Activated CD4-positive, alpha-beta T cell treated with anti-CD3 and anti-CD28 coated beads, Interleukin-2, amount 10 ng/mL, durations not matched to agents 24 days and 14 days (primary cell): ENCODE measurements at regions of chr1 and their contacts with region 1.

Region 1: DNA sequence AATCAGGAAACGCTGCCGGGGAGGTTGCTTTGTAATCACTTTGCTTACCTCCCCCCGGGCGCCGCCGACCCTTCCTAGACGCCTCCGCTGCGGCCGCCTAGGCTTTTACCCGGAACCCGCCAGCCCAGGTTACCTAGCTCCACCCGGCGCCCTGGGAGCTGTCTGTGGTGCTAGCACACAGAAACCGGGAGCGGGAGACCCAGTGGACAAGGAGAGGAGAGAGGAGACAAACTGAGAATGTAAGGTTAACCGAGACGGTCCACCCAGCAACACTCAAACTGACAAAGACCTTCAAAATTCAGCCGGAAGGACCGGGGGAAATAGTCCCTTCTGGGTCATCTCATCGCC is 9.8 kb downstream of the BARHL2 start:
- DNase-seq: peak; percentile 62
- H3K4me3 Mint-ChIP-seq: no peak overlapping the region
- H3K27ac Mint-ChIP-seq: no peak overlapping the region
- H3K4me1 Mint-ChIP-seq: peaks cover 2% of the 10 kb centered on the region
- H3K27me3 Mint-ChIP-seq: peaks cover 77% of the 10 kb centered on the region

Region 2: DNA sequence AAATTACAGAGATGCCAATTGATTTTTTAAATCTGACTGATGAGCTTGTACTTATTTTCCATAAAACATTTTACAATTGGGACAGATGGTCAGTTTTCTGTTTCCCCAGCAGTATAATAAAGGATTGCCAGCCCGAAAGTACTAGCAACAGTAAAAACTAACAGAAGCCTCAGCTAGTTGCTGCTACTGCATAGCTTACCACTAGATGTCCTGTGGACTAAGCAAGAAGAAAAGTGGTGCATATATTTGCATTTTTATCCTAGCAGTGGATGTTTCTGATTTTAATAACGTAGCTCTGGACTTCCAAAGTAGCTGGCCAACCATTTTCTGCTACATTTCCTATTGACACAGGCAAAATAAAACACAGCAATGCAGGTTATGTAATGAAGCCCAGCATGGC is 231.7 kb before region 1 on chr1:
- intact Hi-C with region 1: no loop called
- DNase-seq: no peak
- H3K4me3 Mint-ChIP-seq: no peak overlapping the region
- H3K27ac Mint-ChIP-seq: no peak overlapping the region
- H3K4me1 Mint-ChIP-seq: no peaks in the 10 kb centered on the region
- H3K27me3 Mint-ChIP-seq: peaks cover 2% of the 10 kb centered on the region

Region 3: GRCh38 chr1:90729504-90730242 is 22.3 kb after region 1 on chr1:
- intact Hi-C with region 1: loop called (anchors 2 kb)
- DNase-seq: no peak
- H3K4me3 Mint-ChIP-seq: no peak overlapping the region
- H3K27ac Mint-ChIP-seq: no peak overlapping the region
- H3K4me1 Mint-ChIP-seq: peaks cover 18% of the 10 kb centered on the region
- H3K27me3 Mint-ChIP-seq: peaks cover 88% of the 10 kb centered on the region

Region 4: DNA sequence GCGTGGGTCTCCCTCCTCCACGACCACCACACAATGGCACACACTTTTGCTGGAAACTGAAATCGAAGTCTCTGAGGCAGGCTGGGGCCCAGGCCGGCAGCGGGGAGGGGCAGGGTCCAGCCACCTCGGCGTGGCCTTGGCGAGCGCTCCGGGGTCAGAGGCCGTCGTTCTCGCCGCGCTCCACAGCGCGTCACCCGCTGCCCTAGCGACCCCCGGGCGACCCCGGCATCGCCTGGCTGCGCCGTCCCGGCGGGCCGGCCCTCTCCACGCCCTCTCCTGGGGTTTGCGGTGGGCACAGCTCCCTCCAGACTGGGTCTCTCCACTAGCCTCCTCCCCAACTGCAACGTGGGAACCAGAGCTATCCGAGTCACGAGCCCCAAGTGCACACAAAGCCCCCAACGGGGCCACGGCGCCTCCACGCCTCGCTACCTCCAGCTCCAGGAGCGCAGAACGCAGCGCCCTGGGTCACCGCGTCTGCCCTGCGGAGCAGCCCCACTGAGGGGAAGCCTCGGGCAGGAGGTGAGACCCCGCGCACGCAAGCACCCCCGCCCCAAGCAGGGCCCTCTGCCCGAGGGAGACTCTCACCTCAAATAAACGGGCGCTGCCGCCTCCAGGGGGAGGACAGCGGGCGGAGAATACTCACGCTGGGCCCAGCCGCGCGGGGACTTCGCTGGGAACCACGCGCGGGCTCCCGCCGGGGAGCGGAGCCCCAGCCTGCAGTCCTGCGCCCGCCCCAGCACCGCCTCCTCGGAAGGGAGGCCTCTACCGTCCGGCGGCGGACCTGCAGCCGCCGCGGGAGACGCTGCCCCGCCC is 143.8 kb after region 1 on chr1:
- intact Hi-C with region 1: no loop called
- DNase-seq: peak; percentile 91
- H3K4me3 Mint-ChIP-seq: peak overlapping the region; percentile 77
- H3K27ac Mint-ChIP-seq: no peak overlapping the region
- H3K4me1 Mint-ChIP-seq: peaks cover 12% of the 10 kb centered on the region
- H3K27me3 Mint-ChIP-seq: peaks cover 68% of the 10 kb centered on the region